ACHN (cell line): ENCODE measurements at regions of chr12 and their contacts with region 1.

Region 1: DNA sequence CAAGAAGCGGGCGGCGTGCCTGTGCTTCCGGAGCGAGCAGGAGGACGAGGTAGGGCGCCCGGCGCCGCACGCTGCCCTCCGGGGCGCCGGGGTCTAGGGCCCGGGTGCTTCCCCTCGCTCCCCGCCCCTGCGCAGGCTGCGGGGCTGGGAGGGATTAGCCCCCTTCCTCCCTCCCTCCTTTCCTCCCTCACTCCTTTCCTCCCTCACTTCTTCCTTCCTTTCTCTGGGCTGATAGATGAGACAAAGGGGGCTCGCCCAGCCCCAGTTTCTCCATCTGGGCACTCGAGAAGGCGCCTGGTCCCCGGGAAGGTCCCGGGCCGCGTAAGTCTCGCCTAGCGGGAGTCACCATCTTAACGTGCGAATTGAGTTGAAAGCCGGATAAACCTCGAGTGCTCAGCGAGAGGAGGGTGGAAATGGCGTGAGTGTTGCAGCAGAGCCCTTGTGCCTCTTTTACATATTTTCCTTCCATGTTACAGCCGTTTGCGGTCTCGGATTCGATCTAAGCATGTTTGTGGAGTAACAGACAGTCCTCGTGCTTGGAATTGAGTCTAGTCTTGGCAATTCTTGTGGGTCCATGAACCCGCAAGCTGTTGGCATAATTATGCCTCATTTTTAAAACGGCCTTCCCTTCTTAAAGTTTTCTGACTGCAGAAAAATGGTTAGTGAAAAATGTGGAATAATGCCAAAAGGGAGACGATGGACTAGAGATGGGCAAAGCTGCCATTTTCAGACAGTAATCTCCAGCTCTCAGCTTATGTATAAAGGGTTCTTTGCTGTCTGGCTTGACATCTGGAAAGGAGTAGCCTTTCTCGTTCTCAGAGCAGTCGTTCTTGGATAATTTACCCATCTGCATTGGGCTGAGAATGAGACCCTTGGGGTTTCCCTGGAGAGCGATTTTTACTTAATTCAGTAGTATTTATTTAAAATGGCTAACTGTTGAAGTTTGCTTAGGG is 924 bp downstream of the NUDT4 start:
- DNase-seq: peak; percentile 87

Region 2: GRCh38 chr12:93002293-93003054 is 376.2 kb before region 1 on chr12:
- in situ Hi-C with region 1: loop called (anchors 25 kb)
- DNase-seq: no peak

Region 3: GRCh38 chr12:93751864-93752610 is 373.4 kb after region 1 on chr12:
- in situ Hi-C with region 1: no loop called
- DNase-seq: no peak